A673 (cell line): ENCODE measurements at regions of chr6 and their contacts with region 1.

Region 1: GRCh38 chr6:12733876-12734275 is 17.3 kb downstream of the PHACTR1 start:
- DNase-seq: peak; percentile 50
- H3K4me3 ChIP-seq: no peak overlapping the region
- H3K27ac ChIP-seq: peak overlapping the region; percentile 53
- H3K4me1 ChIP-seq: peaks cover 13% of the 10 kb centered on the region
- H3K27me3 ChIP-seq: peaks cover 2% of the 10 kb centered on the region
- CTCF ChIP-seq: no peak

Region 2: GRCh38 chr6:12572896-12573827 is 160.7 kb before region 1 on chr6:
- CTCF ChIA-PET with region 1: no interaction called
- POLR2A ChIA-PET with region 1: no interaction called
- intact Hi-C with region 1: no loop called
- DNase-seq: peak; percentile 79
- H3K4me3 ChIP-seq: no peak overlapping the region
- H3K27ac ChIP-seq: peak overlapping the region; percentile 9
- H3K4me1 ChIP-seq: peaks cover 16% of the 10 kb centered on the region
- H3K27me3 ChIP-seq: no peaks in the 10 kb centered on the region
- CTCF ChIP-seq: no peak

Region 3: GRCh38 chr6:13604546-13605416 is 870.9 kb after region 1 on chr6:
- CTCF ChIA-PET with region 1: interaction called, 11 read pairs
- POLR2A ChIA-PET with region 1: no interaction called
- intact Hi-C with region 1: no loop called
- DNase-seq: no peak
- H3K4me3 ChIP-seq: no peak overlapping the region
- H3K27ac ChIP-seq: no peak overlapping the region
- H3K4me1 ChIP-seq: no peaks in the 10 kb centered on the region
- H3K27me3 ChIP-seq: no peaks in the 10 kb centered on the region
- CTCF ChIP-seq: no peak